ENCODE measurements at regions of chr17 and their contacts with region 1.

Region 1: GRCh38 chr17:54992797-54993639 is 24.5 kb downstream of the STXBP4 start:
- DNase-seq: no peak
- H3K4me3 Mint-ChIP-seq: no peak overlapping the region
- H3K27ac Mint-ChIP-seq: no peak overlapping the region
- H3K4me1 Mint-ChIP-seq: no peaks in the 10 kb centered on the region
- H3K27me3 Mint-ChIP-seq: no peaks in the 10 kb centered on the region

Region 2: DNA sequence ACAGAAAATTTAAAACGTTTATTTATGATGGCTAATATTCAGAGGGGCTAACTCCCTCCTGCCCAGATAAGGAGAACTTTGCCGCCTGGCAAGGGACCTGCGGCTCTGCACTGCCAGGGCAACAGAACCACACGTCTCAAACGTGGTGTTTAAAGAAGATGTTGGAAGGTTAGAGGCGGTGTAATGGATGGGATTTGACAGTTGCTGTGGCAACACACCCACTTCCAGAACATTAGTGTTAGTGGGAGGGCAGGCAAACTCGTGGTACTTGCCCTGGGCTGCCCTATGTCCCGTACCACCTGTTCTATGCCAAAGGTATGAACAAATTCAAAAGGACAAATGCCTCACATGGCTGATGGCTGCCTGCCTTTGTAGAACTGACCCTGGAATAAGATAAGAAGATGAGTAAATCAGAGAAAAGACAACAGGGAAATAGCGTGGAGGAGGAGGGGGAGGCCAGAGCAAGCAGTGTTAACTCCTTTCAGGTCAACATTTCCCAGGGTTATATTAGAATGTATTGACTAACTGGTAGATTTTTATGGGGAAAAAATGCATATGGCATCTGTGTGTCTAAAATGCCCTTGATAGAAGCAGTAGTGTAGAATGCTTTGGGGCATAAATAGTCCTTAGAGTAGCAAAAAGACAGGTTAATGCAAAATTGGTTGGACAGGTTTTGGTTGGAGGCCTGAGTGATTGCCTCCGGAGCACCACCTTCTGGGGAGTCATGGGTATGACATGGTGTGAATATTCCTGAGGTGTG is 302.6 kb after region 1 on chr17:
- intact Hi-C with region 1: loop called (anchors 1 kb)
- DNase-seq: peak; percentile 39
- H3K4me3 Mint-ChIP-seq: no peak overlapping the region
- H3K27ac Mint-ChIP-seq: no peak overlapping the region
- H3K4me1 Mint-ChIP-seq: no peaks in the 10 kb centered on the region
- H3K27me3 Mint-ChIP-seq: peaks cover 7% of the 10 kb centered on the region

Region 3: GRCh38 chr17:55348749-55349354 is 355.8 kb after region 1 on chr17:
- intact Hi-C with region 1: loop called (anchors 2 kb)
- DNase-seq: peak; percentile 28
- H3K4me3 Mint-ChIP-seq: no peak overlapping the region
- H3K27ac Mint-ChIP-seq: no peak overlapping the region
- H3K4me1 Mint-ChIP-seq: peaks cover 58% of the 10 kb centered on the region
- H3K27me3 Mint-ChIP-seq: peaks cover 2% of the 10 kb centered on the region

Region 4: DNA sequence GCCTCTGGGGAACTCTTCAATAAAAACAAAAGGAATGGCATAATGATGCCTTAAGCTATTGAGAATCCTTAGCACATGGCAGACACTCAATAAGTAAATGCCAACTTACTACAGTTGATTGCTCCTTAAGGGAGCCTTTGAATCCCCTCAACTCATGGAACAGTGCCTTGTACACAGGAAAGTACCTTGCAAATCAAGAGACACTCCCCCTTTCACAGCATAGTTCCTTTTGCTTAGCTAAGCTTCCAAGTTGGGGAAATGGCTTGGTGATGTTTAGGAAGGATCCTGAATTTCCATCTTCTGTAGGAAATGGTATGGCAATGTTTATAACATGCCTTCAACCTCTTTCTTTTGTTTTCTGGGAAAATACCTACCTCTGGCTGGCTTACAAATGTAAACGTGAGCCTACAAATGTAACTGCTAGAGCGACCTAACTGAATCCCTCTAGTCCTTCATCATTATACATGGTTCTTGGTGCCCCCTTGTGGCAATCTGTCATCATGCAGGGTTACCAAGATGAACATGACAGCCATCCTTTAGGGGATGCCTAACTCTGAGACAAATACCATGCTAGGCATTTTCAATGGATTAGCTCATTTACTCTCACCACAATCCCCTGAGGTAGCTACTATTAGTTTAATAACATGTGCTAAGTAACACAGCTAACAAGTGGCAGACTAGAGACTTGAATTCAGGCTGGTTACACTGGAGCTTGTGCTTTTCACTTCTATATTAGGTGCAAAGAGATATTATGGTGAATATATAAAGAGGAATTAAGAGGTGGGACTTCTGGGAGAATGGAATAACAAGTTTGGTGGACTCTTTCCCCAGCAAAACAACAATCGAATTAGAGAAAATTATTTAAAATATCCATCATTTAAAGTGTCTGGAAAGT is 363.7 kb after region 1 on chr17:
- intact Hi-C with region 1: loop called (anchors 2 kb)
- DNase-seq: peak; percentile 65
- H3K4me3 Mint-ChIP-seq: no peak overlapping the region
- H3K27ac Mint-ChIP-seq: no peak overlapping the region
- H3K4me1 Mint-ChIP-seq: peaks cover 6% of the 10 kb centered on the region
- H3K27me3 Mint-ChIP-seq: peaks cover 29% of the 10 kb centered on the region

Region 5: GRCh38 chr17:55513885-55514591 is 521.0 kb after region 1 on chr17:
- intact Hi-C with region 1: loop called (anchors 5 kb)
- DNase-seq: peak; percentile 50
- H3K4me3 Mint-ChIP-seq: no peak overlapping the region
- H3K27ac Mint-ChIP-seq: no peak overlapping the region
- H3K4me1 Mint-ChIP-seq: peaks cover 14% of the 10 kb centered on the region
- H3K27me3 Mint-ChIP-seq: peaks cover 25% of the 10 kb centered on the region